GM13976 (cell line): ENCODE measurements at regions of chr1 and their contacts with region 1.

Region 1: DNA sequence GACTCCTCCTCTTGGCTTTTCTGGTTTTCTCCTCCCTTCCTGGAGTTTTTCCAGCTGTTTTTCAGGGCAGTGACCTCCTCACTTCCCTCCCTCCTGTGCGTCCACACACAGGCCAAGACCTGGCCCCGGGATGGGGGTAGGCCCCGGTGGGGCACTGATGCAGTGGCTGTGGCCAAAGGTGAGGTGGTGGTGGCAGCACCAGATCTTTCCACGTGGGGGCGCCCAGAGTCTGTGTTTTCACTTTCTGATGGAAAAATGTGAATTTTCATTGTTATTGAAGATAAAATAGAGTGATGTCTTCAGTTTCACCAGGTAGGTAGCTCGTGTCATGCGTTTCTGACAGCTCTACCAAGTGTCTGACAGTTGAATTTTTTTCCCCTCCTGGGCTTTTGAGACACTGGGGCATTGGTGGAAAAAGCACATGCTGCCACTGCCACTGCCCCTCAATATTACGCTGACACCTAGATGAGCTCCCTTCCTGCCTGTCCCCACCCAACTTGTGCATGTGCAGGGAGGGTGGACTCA is 39.9 kb upstream of the MAGOH start:
- DNase-seq: peak; percentile 87
- CTCF ChIP-seq: peak; percentile 87

Region 2: GRCh38 chr1:53393325-53393792 is 115.1 kb after region 1 on chr1:
- in situ Hi-C with region 1: loop called (anchors 5 kb)
- DNase-seq: peak; percentile 88
- CTCF ChIP-seq: peak; percentile 87